GM10248 (cell line): ENCODE measurements at regions of chr1 and their contacts with region 1.

Region 1: GRCh38 chr1:180101411-180101810 is 53.3 kb upstream of the QSOX1 start:
- DNase-seq: no peak
- CTCF ChIP-seq: no peak

Region 2: GRCh38 chr1:180083164-180083563 is 18.2 kb before region 1 on chr1:
- CTCF ChIA-PET with region 1: interaction called, 15 read pairs
- POLR2A ChIA-PET with region 1: no interaction called
- DNase-seq: no peak
- CTCF ChIP-seq: no peak